ENCODE measurements at regions of chr2 and their contacts with region 1.

Region 1: DNA sequence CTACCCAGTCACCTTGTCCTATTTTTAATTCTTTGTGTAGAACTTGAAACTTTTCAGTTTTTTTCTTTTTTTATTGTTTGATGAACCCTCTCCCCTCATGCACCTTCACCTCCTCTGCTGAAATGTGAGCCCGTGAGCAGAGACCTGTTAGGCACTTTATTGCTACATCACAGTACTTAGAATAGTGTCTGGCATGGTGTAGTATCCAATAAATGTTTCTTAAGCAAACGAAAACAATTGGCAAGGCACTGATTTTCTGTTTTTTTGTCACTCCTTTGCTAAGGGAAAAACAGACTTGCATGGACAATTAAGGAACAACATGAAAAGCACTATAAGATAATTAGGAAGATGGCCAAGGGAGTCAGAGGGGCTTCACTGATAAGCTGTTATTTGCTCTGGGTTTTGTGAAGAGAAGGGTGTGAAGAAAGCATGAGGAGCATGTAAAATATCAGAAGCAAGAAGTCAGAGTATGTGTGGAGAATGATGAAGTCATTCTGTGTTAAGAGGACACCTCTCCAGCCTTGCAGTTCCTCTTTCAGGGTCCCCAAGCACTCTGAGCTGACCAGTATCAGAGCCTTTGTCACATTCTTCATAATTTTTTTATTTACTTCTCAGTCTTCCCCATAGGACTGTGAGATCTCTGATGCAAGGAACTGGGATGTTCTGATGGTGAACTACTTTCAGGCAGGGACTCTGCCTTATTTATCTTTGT is 99.7 kb upstream of the CAVIN2 start:
- DNase-seq: no peak
- ATAC-seq: no peak
- H3K4me3 ChIP-seq: no peak overlapping the region
- H3K27ac ChIP-seq: no peak overlapping the region
- H3K4me1 ChIP-seq: peaks cover 0 to 12% of the 10 kb centered on the region in 2 experiments; a peak in 3 of 5 replicates
- H3K27me3 ChIP-seq: no peaks in the 10 kb centered on the region
- CTCF ChIP-seq: no peak
- EP300 ChIP-seq: no peak
- POLR2A ChIP-seq: no peak
- RAD21 ChIP-seq: no peak

Region 2: GRCh38 chr2:192148620-192149321 is 202.1 kb after region 1 on chr2:
- CTCF ChIA-PET with region 1: no interaction called
- POLR2A ChIA-PET with region 1: no interaction called
- in situ Hi-C with region 1: no loop called
- intact Hi-C with region 1: loop called (anchors 5 kb)
- DNase-seq: no peak
- ATAC-seq: no peak
- H3K4me3 ChIP-seq: no peak overlapping the region
- H3K27ac ChIP-seq: no peak overlapping the region
- H3K4me1 ChIP-seq: no peaks in the 10 kb centered on the region; a peak in 1 of 5 replicates
- H3K27me3 ChIP-seq: no peaks in the 10 kb centered on the region
- CTCF ChIP-seq: no peak
- EP300 ChIP-seq: no peak
- POLR2A ChIP-seq: no peak
- RAD21 ChIP-seq: no peak

Region 3: GRCh38 chr2:192162392-192163042 is 215.9 kb after region 1 on chr2:
- CTCF ChIA-PET with region 1: no interaction called
- POLR2A ChIA-PET with region 1: no interaction called
- in situ Hi-C with region 1: no loop called
- intact Hi-C with region 1: loop called (anchors 5 kb)
- DNase-seq: peak; percentile 26 to 78 (median 37)
- ATAC-seq: peak; percentile 93
- H3K4me3 ChIP-seq: no peak overlapping the region
- H3K27ac ChIP-seq: no peak overlapping the region
- H3K4me1 ChIP-seq: no peaks in the 10 kb centered on the region
- H3K27me3 ChIP-seq: no peaks in the 10 kb centered on the region
- CTCF ChIP-seq: peak; percentile 66 to 79 (median 67)
- EP300 ChIP-seq: no peak
- POLR2A ChIP-seq: no peak
- RAD21 ChIP-seq: peak; percentile 91 to 92

Measured in K562 (cell line).